ENCODE measurements at regions of chr9 and their contacts with region 1.

Region 1: DNA sequence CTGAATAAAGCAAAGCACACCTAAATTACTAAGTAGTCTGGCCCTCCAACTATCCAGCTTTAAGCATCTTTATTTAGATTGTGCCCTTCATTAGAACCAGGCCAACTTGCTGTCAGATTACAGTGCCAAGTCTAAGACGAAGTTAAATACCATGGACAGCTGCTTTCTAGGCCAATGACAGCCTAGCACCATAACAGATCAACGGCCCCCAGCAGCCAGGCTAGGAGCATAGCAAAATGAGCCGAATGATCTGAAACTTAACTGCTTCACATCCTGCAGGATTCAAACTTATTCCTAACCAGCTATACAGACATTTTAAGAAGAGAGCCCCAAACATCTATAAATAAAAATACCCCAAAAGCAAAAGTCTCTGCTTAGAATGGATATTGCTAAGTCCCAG is 6.8 kb downstream of the SLC24A2 start:
- DNase-seq: no peak
- ATAC-seq: no peak; the same call in 2 of the 3 replicates
- H3K4me3 ChIP-seq: no peak overlapping the region
- H3K27ac ChIP-seq: no peak overlapping the region
- H3K4me1 ChIP-seq: no peaks in the 10 kb centered on the region
- H3K27me3 ChIP-seq: no peaks in the 10 kb centered on the region
- CTCF ChIP-seq: no peak
- EP300 ChIP-seq: no peak
- POLR2A ChIP-seq: no peak
- RAD21 ChIP-seq: no peak

Region 2: DNA sequence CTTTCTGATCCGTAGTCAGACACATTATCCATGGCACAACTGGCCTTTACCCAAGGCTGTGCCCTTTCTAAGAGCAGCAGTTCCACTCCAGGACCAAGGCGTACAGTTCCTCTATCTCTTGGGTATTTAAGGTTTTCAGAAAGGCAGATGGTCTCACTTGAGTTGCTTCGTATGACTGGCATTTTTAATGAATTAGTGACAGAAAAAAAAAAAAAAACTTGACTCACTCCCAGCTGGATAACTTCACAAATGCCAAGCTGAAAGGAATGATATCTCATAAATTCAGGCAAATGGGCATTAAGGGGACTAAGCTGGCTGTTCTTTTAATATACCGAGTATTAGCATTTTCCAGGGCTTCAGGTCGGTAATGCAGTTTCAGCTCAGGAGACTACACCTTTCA is 53.9 kb before region 1 on chr9:
- CTCF ChIA-PET with region 1: no interaction called
- POLR2A ChIA-PET with region 1: no interaction called
- RAD21 ChIA-PET with region 1: no interaction called
- SMC1A ChIA-PET with region 1: no interaction called
- in situ Hi-C with region 1: no loop called
- intact Hi-C with region 1: loop called (anchors 5 kb)
- DNase-seq: no peak
- ATAC-seq: no peak
- H3K4me3 ChIP-seq: no peak overlapping the region
- H3K27ac ChIP-seq: no peak overlapping the region
- H3K4me1 ChIP-seq: no peaks in the 10 kb centered on the region
- H3K27me3 ChIP-seq: no peaks in the 10 kb centered on the region
- CTCF ChIP-seq: no peak
- EP300 ChIP-seq: no peak
- POLR2A ChIP-seq: no peak
- RAD21 ChIP-seq: no peak

Region 3: DNA sequence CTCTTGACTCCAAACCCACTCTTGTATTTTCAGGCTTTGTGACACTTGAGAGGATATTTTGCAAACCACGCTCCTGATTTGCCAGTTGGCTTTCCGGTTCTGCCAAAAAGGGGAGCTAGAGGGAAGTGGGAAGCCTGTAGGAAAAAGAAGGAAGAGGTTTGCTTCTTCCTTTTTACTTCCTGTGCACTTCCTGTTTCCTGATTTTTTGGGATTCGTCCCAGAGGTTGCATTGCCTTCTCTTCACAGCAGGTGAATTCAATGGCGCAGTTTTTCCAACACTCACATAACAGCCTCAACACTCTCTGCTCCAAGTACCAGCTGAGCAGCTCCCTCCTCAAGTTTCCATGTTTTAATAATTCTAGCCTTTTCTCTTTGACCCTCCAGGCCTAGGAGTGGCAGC is 40.8 kb before region 1 on chr9:
- CTCF ChIA-PET with region 1: no interaction called
- POLR2A ChIA-PET with region 1: no interaction called
- RAD21 ChIA-PET with region 1: no interaction called
- SMC1A ChIA-PET with region 1: no interaction called
- in situ Hi-C with region 1: no loop called
- intact Hi-C with region 1: loop called (anchors 5 kb)
- DNase-seq: no peak
- ATAC-seq: no peak
- H3K4me3 ChIP-seq: no peak overlapping the region
- H3K27ac ChIP-seq: no peak overlapping the region
- H3K4me1 ChIP-seq: no peaks in the 10 kb centered on the region
- H3K27me3 ChIP-seq: no peaks in the 10 kb centered on the region
- CTCF ChIP-seq: no peak
- EP300 ChIP-seq: no peak
- POLR2A ChIP-seq: no peak
- RAD21 ChIP-seq: no peak

Measured in GM12878 (cell line).